HEK293 (cell line): ENCODE measurements at regions of chr1 and their contacts with region 1.

Region 1: GRCh38 chr1:160085686-160086455 is 4.5 kb downstream of the KCNJ9 start:
- H3K4me3 ChIP-seq: no peak overlapping the region
- H3K27ac ChIP-seq: no peak overlapping the region
- H3K4me1 ChIP-seq: no peaks in the 10 kb centered on the region
- CTCF ChIP-seq: peak; percentile 82

Region 2: GRCh38 chr1:160031365-160032164 is 54.3 kb before region 1 on chr1 and contains the start of gene PIGM:
- CTCF ChIA-PET with region 1: interaction called, 20 read pairs
- POLR2A ChIA-PET with region 1: no interaction called
- H3K4me3 ChIP-seq: peak within 1 kb of the TSS; percentile 82
- H3K27ac ChIP-seq: peak within 1 kb of the TSS; percentile 72
- H3K4me1 ChIP-seq: peaks cover 17% of the 10 kb centered on the region; the same call in 1 of the 2 replicates
- CTCF ChIP-seq: 0 out of 2 replicates have a peak, but pooled peaks have one; percentile 23

Region 3: GRCh38 chr1:160046494-160047110 is 39.3 kb before region 1 on chr1:
- CTCF ChIA-PET with region 1: interaction called, 541 read pairs
- POLR2A ChIA-PET with region 1: no interaction called
- H3K4me3 ChIP-seq: no peak overlapping the region
- H3K27ac ChIP-seq: no peak overlapping the region
- H3K4me1 ChIP-seq: no peaks in the 10 kb centered on the region
- CTCF ChIP-seq: peak; percentile 59

Region 4: GRCh38 chr1:160058087-160058486 is 27.8 kb before region 1 on chr1:
- CTCF ChIA-PET with region 1: interaction called, 541 read pairs
- POLR2A ChIA-PET with region 1: no interaction called
- H3K4me3 ChIP-seq: no peak overlapping the region
- H3K27ac ChIP-seq: no peak overlapping the region
- H3K4me1 ChIP-seq: no peaks in the 10 kb centered on the region
- CTCF ChIP-seq: 0 out of 2 replicates have a peak, but pooled peaks have one; percentile 14

Region 5: GRCh38 chr1:160176101-160176500 is 90.2 kb after region 1 on chr1:
- CTCF ChIA-PET with region 1: no interaction called
- POLR2A ChIA-PET with region 1: no interaction called
- H3K4me3 ChIP-seq: no peak overlapping the region
- H3K27ac ChIP-seq: no peak overlapping the region
- H3K4me1 ChIP-seq: no peaks in the 10 kb centered on the region
- CTCF ChIP-seq: no peak

Region 6: DNA sequence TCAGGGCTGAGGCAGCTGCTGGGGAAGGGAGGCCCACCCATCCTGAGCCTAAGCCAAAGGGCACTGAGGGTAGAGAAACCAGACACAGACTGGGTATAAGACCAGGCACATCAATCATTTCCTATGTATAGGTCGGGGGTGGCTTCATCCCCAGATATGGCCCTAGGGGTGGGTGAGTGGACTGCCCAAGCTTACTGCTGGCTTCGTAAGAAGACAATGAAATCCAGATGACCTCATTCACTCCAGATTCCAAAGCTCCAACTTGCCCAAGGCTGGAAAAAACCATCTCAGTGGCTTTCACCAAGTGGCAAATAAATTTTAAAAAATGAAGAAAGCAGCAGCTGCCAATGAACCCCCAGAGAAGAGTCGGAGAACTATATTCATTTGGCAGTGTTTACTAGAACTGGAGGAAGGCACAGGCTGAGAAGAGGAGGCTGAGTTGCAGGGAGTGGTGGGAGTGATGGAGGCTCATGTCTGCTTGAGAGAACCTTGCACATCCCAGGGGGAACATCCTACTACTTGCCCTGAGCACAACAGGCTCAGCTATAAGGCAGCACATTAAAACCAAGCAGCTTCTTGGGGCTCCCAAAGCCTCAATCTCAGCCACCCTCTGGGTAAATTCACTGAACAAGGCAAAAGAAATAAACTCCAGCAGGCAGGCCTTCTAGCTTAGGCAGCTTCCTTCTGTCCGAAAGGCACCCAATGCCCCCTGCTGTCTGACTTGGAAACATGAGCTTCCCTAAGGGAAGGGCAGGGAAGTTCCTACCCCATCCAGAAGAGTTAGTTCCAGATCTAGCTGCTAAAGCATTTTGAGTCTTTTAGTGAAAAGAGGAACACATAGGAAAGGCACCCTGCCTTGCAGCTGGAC is 133.4 kb after region 1 on chr1:
- CTCF ChIA-PET with region 1: interaction called, 24 read pairs
- POLR2A ChIA-PET with region 1: no interaction called
- H3K4me3 ChIP-seq: no peak overlapping the region
- H3K27ac ChIP-seq: no peak overlapping the region; the same call in 1 of the 2 replicates
- H3K4me1 ChIP-seq: no peaks in the 10 kb centered on the region
- CTCF ChIP-seq: peak; percentile 69; the same call in 1 of the 2 replicates

Region 7: DNA sequence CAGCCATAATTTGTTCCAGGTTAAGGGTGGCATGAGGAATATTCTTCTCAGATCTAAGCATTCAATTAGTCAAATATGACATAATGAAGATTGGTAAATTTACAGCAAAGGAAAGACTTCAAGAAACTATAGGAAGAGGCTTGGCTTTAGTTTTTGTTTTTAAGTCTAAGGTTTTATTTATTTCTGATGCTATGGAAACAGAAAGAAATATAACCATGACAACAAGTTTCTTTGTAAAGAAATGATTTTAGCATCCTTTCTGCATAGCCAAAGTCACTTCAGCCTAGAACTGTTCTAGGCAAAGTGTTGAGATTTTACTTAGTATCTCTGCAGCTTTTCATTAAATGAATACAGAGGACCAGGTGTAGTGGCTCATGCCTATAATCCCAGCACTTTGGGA is 147.0 kb after region 1 on chr1:
- CTCF ChIA-PET with region 1: interaction called, 10 read pairs
- POLR2A ChIA-PET with region 1: no interaction called
- H3K4me3 ChIP-seq: no peak overlapping the region
- H3K27ac ChIP-seq: no peak overlapping the region
- H3K4me1 ChIP-seq: no peaks in the 10 kb centered on the region
- CTCF ChIP-seq: no peak